ENCODE measurements at regions of chr7 and their contacts with region 1.

Region 1: GRCh38 chr7:92874567-92874966 is 38.2 kb upstream of the CDK6 start:
- DNase-seq: no peak
- H3K27ac ChIP-seq: no peak overlapping the region
- CTCF ChIP-seq: no peak

Region 2: DNA sequence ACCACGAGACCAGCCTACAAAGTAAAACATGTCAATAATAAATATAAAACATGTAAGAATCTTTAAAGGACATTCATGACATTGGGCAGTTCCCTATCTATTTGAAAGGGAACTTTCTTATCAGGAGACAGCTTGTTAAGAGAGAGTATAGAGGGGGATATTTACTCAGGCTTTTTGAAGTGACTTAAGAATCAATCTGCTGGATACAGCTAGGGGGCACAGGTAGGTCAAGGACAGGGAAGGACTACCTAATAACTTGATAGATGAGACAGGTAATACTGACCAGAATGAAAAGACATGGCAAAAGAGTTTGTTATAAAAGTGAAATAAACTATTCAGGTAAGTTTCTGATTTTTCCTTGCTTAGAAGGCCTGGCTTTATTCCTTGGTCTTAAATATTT is 673.8 kb before region 1 on chr7:
- CTCF ChIA-PET with region 1: no interaction called
- POLR2A ChIA-PET with region 1: no interaction called
- DNase-seq: no peak
- H3K27ac ChIP-seq: no peak overlapping the region
- CTCF ChIP-seq: no peak

Region 3: GRCh38 chr7:93108003-93108402 is 233.4 kb after region 1 on chr7:
- CTCF ChIA-PET with region 1: interaction called, 12 read pairs
- POLR2A ChIA-PET with region 1: no interaction called
- DNase-seq: no peak
- H3K27ac ChIP-seq: no peak overlapping the region
- CTCF ChIP-seq: no peak